IMR-90 (cell line): ENCODE measurements at regions of chr1 and their contacts with region 1.

Region 1: DNA sequence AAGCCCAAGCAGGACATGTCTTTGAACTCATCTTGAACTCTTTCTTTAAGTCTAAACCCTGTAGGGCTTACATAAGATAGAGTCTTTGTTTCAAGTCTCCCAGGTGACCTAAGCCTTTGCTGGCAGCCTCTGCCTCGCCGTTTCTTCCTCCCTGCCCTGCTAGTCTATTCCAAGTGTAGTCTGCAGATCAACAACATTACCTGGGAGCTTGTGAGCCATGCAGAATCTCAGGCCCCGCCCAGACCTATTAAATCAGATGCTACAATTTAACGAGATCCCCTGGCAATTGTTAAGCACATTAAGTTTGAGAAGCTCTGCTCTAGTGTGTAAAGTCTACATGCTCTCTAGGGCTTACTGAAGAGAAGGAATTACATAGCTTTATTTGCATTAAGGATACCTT is 271.6 kb downstream of the PBX1 start:
- DNase-seq: no peak
- ATAC-seq: no peak
- H3K4me3 ChIP-seq: no peak overlapping the region
- H3K27ac ChIP-seq: no peak overlapping the region
- H3K4me1 ChIP-seq: 0 out of 2 replicates have a peak, but pooled peaks cover 2% of the 10 kb centered on the region
- H3K27me3 ChIP-seq: no peaks in the 10 kb centered on the region
- CTCF ChIP-seq: no peak
- POLR2A ChIP-seq: no peak
- RAD21 ChIP-seq: no peak

Region 2: GRCh38 chr1:164794310-164794709 is 36.3 kb before region 1 on chr1:
- CTCF ChIA-PET with region 1: no interaction called
- POLR2A ChIA-PET with region 1: no interaction called
- dilution Hi-C with region 1: no loop called
- in situ Hi-C with region 1: no loop called
- intact Hi-C with region 1: loop called (anchors 1 kb)
- DNase-seq: peak; percentile 94
- ATAC-seq: peak; percentile 94
- H3K4me3 ChIP-seq: no peak overlapping the region
- H3K27ac ChIP-seq: no peak overlapping the region
- H3K4me1 ChIP-seq: peaks cover 3% of the 10 kb centered on the region; the same call in 1 of the 2 replicates
- H3K27me3 ChIP-seq: no peaks in the 10 kb centered on the region
- CTCF ChIP-seq: no peak
- POLR2A ChIP-seq: no peak
- RAD21 ChIP-seq: no peak